ENCODE measurements at regions of chr9 and their contacts with region 1.

Region 1: GRCh38 chr9:77751341-77752091 is 103.4 kb upstream of the GNA14 start:
- DNase-seq: peak; percentile 58
- H3K4me3 Mint-ChIP-seq: no peak overlapping the region
- H3K27ac Mint-ChIP-seq: no peak overlapping the region
- H3K4me1 Mint-ChIP-seq: peaks cover 16% of the 10 kb centered on the region
- H3K27me3 Mint-ChIP-seq: no peaks in the 10 kb centered on the region
- CTCF ChIP-seq: peak; percentile 39

Region 2: GRCh38 chr9:77291714-77292113 is 459.8 kb before region 1 on chr9:
- CTCF ChIA-PET with region 1: interaction called, 6 read pairs
- POLR2A ChIA-PET with region 1: no interaction called
- intact Hi-C with region 1: loop called (anchors 2 kb)
- DNase-seq: peak; percentile 65
- H3K4me3 Mint-ChIP-seq: no peak overlapping the region
- H3K27ac Mint-ChIP-seq: peak overlapping the region; percentile 2
- H3K4me1 Mint-ChIP-seq: peaks cover 19% of the 10 kb centered on the region
- H3K27me3 Mint-ChIP-seq: no peaks in the 10 kb centered on the region
- CTCF ChIP-seq: peak; percentile 53

Region 3: DNA sequence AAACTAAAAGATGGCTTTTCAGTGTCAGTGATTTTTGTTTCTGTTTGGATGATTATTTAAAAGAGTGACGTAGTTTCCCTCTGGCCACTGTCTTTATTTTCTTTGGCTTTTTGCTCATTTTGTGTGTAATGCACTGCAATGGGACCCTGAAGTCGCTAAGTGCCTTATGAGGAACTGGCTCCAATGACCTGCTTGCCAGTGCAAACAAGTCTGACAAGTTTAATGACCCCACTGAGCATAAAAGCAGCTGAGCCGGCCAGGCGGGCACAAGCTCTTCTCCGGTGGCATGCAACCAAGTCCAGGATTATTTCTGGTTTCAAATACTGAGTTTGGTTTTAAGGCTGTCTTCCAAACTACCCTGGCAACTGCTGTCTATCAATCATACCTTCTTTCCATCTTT is 87.8 kb before region 1 on chr9:
- CTCF ChIA-PET with region 1: no interaction called
- POLR2A ChIA-PET with region 1: no interaction called
- intact Hi-C with region 1: loop called (anchors 1 kb)
- DNase-seq: peak; percentile 6
- H3K4me3 Mint-ChIP-seq: no peak overlapping the region
- H3K27ac Mint-ChIP-seq: no peak overlapping the region
- H3K4me1 Mint-ChIP-seq: peaks cover 9% of the 10 kb centered on the region
- H3K27me3 Mint-ChIP-seq: no peaks in the 10 kb centered on the region
- CTCF ChIP-seq: no peak

Region 4: DNA sequence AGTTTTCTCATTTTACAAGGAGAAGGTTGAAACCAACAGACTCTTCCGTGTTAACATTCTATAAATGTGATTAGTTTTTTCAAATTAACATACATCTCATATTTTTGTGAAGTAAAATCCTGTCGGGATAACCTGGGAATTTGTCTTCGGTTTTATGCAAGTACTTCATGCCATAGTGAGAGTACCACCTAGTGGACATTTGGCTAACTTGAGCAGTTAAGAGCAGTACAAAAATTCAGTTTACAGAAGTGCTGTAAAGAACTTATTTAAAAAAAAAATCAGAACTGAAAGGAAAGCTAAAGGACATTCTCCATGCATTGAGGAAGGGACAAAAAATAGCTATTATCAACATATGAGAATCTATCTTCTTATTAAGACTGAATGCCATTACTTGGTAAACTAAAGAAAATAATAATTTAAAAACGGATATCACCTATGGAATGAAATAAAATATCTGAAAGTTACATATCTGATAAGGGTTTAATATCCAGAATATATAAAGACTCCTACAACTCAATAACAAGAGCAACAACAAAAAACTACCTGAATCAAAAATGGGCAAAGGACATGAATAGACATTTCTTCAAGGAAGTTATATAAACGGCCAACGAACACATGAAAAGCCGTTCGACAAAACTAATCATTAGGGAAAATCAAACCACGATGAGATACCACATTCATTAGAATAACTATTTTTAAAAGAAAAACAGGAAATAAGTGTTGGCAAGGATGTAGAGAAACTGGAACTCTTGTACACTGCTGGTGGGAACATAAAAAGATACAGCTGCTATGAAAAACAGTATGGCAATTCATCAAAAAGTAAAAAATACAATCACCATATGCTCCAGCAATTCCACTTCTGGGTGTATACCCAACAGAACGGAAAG is 13.6 kb after region 1 on chr9:
- CTCF ChIA-PET with region 1: interaction called, 10 read pairs
- POLR2A ChIA-PET with region 1: no interaction called
- intact Hi-C with region 1: no loop called
- DNase-seq: peak; percentile 40
- H3K4me3 Mint-ChIP-seq: no peak overlapping the region
- H3K27ac Mint-ChIP-seq: no peak overlapping the region
- H3K4me1 Mint-ChIP-seq: no peaks in the 10 kb centered on the region
- H3K27me3 Mint-ChIP-seq: no peaks in the 10 kb centered on the region
- CTCF ChIP-seq: peak; percentile 41

Region 5: DNA sequence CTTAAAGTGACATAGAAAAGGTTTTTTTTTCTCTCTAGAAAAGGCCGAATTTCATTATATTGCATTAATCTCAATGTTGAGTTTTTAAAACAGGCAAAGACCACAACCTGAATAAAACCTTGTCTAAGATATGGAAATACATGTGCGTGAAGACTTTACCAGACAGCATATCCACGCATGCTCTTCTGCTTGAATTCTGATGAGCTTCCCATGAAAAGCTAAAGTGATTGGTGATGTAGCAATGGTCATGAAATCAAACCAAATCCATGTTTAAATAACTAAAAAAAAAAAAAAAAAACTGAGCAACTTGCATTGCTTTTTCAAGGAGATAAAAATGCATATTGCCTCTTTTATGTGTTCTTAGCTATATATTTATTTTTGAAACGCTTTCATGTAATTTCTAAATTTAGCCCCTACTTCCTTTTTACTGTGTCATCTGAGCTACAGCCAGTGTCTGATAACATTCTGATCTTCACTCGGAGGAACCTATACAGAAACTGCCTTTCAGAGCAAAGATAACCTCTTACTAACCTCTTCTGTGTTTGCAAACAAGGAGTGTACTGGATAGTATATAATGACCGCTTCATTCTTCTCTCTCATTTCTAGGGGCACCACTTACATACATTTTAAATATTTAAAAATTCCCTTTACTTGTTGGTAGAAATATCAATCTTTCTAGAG is 75.7 kb after region 1 on chr9:
- CTCF ChIA-PET with region 1: no interaction called
- POLR2A ChIA-PET with region 1: no interaction called
- intact Hi-C with region 1: no loop called
- DNase-seq: no peak
- H3K4me3 Mint-ChIP-seq: no peak overlapping the region
- H3K27ac Mint-ChIP-seq: no peak overlapping the region
- H3K4me1 Mint-ChIP-seq: peaks cover 4% of the 10 kb centered on the region
- H3K27me3 Mint-ChIP-seq: no peaks in the 10 kb centered on the region
- CTCF ChIP-seq: no peak

Region 6: DNA sequence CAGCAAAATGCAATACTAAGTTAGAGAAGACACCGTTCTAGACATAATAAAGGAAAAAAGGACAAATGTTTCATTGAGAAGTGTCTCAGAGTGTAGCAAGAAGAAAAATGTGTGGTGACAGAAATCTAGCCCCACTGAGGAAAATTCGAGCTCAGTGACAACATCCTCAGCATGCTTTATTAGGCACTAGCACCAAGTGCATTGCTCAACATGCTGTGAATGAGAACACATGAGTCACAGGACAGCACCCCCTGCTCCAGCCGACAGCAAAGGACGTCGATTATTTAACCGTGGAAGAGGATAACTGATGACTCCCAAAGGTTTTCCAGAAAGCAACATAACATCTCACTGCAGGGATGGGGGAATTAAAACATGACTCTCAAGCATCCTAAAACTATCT is 97.4 kb after region 1 on chr9:
- CTCF ChIA-PET with region 1: no interaction called
- POLR2A ChIA-PET with region 1: no interaction called
- intact Hi-C with region 1: no loop called
- DNase-seq: peak; percentile 88
- H3K4me3 Mint-ChIP-seq: no peak overlapping the region
- H3K27ac Mint-ChIP-seq: peak overlapping the region; percentile 75
- H3K4me1 Mint-ChIP-seq: peaks cover 8% of the 10 kb centered on the region
- H3K27me3 Mint-ChIP-seq: no peaks in the 10 kb centered on the region
- CTCF ChIP-seq: no peak

Region 7: DNA sequence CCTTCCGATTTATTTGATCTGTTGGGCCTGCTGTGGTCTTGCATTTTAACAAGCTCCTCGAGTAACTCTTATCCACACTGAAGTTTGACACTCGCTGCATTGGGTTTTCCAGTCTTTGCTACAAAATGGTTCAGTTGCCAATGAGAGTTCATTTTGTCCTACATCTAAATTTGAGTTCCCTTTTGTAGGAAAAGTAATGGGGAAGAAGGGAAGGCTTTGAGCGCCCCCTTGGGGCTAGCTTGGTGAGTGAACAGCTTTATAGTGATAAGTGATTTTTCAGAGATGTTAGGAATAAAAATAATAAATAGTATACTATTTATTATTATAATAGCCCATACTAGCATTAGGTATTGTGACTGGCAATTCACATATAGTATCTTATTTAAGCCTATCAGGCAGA is 370.0 kb after region 1 on chr9:
- CTCF ChIA-PET with region 1: interaction called, 3 read pairs
- POLR2A ChIA-PET with region 1: no interaction called
- intact Hi-C with region 1: loop called (anchors 5 kb)
- DNase-seq: peak; percentile 80
- H3K4me3 Mint-ChIP-seq: no peak overlapping the region
- H3K27ac Mint-ChIP-seq: no peak overlapping the region
- H3K4me1 Mint-ChIP-seq: peaks cover 30% of the 10 kb centered on the region
- H3K27me3 Mint-ChIP-seq: no peaks in the 10 kb centered on the region
- CTCF ChIP-seq: peak; percentile 66